Caco-2 (cell line): ENCODE measurements at regions of chr7 and their contacts with region 1.

Region 1: GRCh38 chr7:135281363-135281949 is 47.8 kb downstream of the STRA8 start:
- DNase-seq: peak; percentile 84 to 86
- H3K4me3 ChIP-seq: no peak overlapping the region
- H3K4me3 Mint-ChIP-seq: no peak overlapping the region
- H3K27ac Mint-ChIP-seq: no peak overlapping the region
- H3K4me1 ChIP-seq: no peaks in the 10 kb centered on the region
- H3K4me1 Mint-ChIP-seq: no peaks in the 10 kb centered on the region
- H3K27me3 ChIP-seq: no peaks in the 10 kb centered on the region
- H3K27me3 Mint-ChIP-seq: peaks cover 2% of the 10 kb centered on the region
- CTCF ChIP-seq: peak; percentile 98

Region 2: GRCh38 chr7:135300913-135301765 is 19.7 kb after region 1 on chr7:
- CTCF ChIA-PET with region 1: interaction called, 12 read pairs
- POLR2A ChIA-PET with region 1: no interaction called
- intact Hi-C with region 1: no loop called
- DNase-seq: no peak
- H3K4me3 ChIP-seq: no peak overlapping the region
- H3K4me3 Mint-ChIP-seq: no peak overlapping the region
- H3K27ac Mint-ChIP-seq: no peak overlapping the region
- H3K4me1 ChIP-seq: no peaks in the 10 kb centered on the region
- H3K4me1 Mint-ChIP-seq: no peaks in the 10 kb centered on the region
- H3K27me3 ChIP-seq: no peaks in the 10 kb centered on the region
- H3K27me3 Mint-ChIP-seq: peaks cover 13% of the 10 kb centered on the region
- CTCF ChIP-seq: no peak

Region 3: GRCh38 chr7:135335628-135336139 is 54.2 kb after region 1 on chr7:
- CTCF ChIA-PET with region 1: interaction called, 79 read pairs
- POLR2A ChIA-PET with region 1: no interaction called
- intact Hi-C with region 1: loop called (anchors 1 kb)
- DNase-seq: peak; percentile 93 to 94
- H3K4me3 ChIP-seq: no peak overlapping the region
- H3K4me3 Mint-ChIP-seq: no peak overlapping the region
- H3K27ac Mint-ChIP-seq: no peak overlapping the region
- H3K4me1 ChIP-seq: peaks cover 5% of the 10 kb centered on the region; the same call in 1 of the 2 replicates
- H3K4me1 Mint-ChIP-seq: peaks cover 7% of the 10 kb centered on the region
- H3K27me3 ChIP-seq: no peaks in the 10 kb centered on the region
- H3K27me3 Mint-ChIP-seq: peaks cover 8% of the 10 kb centered on the region
- CTCF ChIP-seq: peak; percentile 70 to 82

Region 4: DNA sequence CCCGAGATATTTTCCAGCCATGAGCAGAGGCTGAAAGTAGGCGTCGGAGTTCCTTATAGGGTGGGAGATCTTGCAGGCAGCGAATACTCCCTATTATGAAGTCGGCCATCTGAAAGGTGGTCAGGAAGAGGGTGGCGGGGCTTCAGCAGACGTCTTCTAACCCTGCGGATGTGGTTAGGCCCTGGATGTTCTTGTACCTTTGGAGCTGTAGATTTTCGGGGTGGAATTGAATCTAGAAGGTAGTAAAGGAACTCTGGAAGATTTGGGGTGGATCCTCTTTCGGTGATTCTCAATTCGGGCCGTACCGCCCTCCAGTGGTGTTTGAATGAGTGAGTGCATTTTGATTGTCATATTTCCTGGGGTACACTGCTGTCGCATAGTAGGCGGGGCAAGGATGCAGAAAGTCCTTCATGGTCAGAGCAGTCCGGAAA is 276.9 kb after region 1 on chr7:
- CTCF ChIA-PET with region 1: no interaction called
- POLR2A ChIA-PET with region 1: no interaction called
- intact Hi-C with region 1: loop called (anchors 2 kb)
- DNase-seq: peak; percentile 72 to 74
- H3K4me3 ChIP-seq: peak overlapping the region; percentile 82
- H3K4me3 Mint-ChIP-seq: no peak overlapping the region
- H3K27ac Mint-ChIP-seq: no peak overlapping the region
- H3K4me1 ChIP-seq: peaks cover 28% of the 10 kb centered on the region
- H3K4me1 Mint-ChIP-seq: peaks cover 7% of the 10 kb centered on the region
- H3K27me3 ChIP-seq: no peaks in the 10 kb centered on the region
- H3K27me3 Mint-ChIP-seq: peaks cover 4% of the 10 kb centered on the region
- CTCF ChIP-seq: peak; percentile 45 to 51

Region 5: GRCh38 chr7:135616136-135616535 is 334.7 kb after region 1 on chr7:
- CTCF ChIA-PET with region 1: no interaction called
- POLR2A ChIA-PET with region 1: no interaction called
- intact Hi-C with region 1: no loop called
- DNase-seq: no peak
- H3K4me3 ChIP-seq: no peak overlapping the region
- H3K4me3 Mint-ChIP-seq: no peak overlapping the region
- H3K27ac Mint-ChIP-seq: no peak overlapping the region
- H3K4me1 ChIP-seq: no peaks in the 10 kb centered on the region
- H3K4me1 Mint-ChIP-seq: no peaks in the 10 kb centered on the region
- H3K27me3 ChIP-seq: no peaks in the 10 kb centered on the region
- H3K27me3 Mint-ChIP-seq: no peaks in the 10 kb centered on the region
- CTCF ChIP-seq: no peak

Region 6: GRCh38 chr7:135645296-135645904 is 363.9 kb after region 1 on chr7:
- CTCF ChIA-PET with region 1: interaction called, 4 read pairs
- POLR2A ChIA-PET with region 1: no interaction called
- intact Hi-C with region 1: loop called (anchors 1 kb)
- DNase-seq: peak in 1 of 2 experiments; percentile 37
- H3K4me3 ChIP-seq: no peak overlapping the region
- H3K4me3 Mint-ChIP-seq: no peak overlapping the region
- H3K27ac Mint-ChIP-seq: no peak overlapping the region
- H3K4me1 ChIP-seq: no peaks in the 10 kb centered on the region
- H3K4me1 Mint-ChIP-seq: no peaks in the 10 kb centered on the region
- H3K27me3 ChIP-seq: no peaks in the 10 kb centered on the region
- H3K27me3 Mint-ChIP-seq: no peaks in the 10 kb centered on the region
- CTCF ChIP-seq: peak; percentile 64 to 73